ENCODE measurements at regions of chr19 and their contacts with region 1.

Region 1: DNA sequence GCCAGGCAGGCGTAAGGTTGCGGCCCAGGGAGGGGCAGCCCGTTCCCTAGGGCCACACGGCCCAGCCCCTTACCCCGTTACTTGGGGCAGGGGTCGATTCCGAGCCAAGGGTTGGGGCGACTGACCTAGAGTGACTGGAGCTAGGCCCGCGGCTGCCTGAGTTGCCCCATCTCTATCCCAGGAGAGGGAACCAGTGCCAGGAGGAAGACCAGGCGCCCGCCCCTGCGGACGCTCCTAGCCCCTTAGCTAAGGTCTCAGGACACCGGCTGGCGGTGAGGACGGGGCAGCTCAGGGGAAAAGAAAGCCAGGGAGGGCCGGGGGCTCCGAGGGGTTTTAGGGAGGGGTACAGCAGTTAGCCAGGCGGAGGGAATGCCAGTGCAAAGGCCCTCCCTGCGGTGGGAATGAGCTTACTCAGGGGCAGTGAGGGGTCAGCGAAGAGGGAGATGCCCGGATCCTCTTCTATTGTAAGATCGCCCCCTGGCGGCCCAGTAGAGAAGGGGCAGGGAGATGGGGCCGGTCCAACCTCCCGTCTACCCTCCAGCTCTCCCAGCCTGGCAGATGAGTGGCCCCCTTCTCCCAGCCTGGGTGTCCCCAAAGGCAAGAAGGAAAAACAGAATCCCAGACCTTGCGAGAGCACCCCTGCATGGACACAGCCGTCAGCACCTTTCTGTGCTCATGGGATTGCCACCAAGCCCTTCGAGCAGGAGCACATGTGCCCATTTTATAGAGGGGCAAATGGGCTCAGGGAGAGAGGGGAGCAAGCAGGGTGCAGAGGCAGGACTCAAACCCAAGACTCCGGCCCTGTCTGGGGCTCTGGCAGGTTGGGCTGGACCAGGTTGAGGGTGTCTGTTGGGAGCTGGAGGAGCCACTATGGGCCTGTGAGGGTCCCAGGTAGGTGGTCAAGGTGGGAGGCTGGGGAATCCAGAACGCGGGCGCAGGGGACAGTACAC is 16.3 kb downstream of the CILP2 start:
- DNase-seq: peak; percentile 85
- CTCF ChIP-seq: peak; percentile 68

Region 2: DNA sequence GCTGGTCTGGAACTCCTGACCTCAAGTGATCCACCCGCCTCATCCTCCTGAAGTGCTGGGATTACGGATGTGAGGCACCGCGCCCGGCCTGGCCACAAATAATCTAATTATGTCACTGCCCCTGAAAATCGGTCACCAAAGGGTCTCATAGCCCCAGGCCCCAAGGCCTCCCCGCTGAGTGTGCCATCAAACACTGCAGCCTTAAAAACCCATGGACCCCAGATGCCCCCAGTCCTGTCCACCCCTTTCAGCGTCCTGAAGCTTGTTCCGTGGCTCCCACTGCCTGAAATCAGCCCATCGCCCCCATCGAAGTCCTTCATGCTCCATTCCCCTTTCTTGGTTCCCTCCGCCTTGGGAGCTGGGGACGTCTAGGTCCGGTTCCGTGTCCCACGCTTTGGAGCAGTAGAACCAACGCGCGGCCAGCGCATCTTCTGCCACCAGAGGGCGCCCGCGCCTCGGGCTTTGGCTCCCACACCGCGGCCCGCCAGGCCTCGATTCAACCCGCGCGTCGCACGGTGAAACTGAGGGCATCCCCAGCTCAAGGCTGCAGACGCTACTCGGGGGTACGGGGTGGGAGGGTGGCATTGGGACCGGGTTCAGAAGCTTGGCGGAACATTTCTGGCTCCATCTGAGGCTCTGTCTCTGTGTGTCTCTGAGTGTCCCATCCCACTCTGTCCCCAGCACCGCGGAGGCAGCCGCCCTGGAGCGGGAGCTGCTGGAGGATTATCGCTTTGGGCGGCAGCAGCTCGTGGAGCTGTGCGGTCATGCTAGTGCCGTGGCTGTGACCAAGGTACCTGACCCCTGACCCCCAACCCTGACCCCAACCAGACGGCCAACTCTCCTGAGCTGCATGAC is 22.2 kb before region 1 on chr19:
- CTCF ChIA-PET with region 1: interaction called, 251 read pairs
- POLR2A ChIA-PET with region 1: no interaction called
- DNase-seq: peak; percentile 86
- CTCF ChIP-seq: peak; percentile 93

Region 3: DNA sequence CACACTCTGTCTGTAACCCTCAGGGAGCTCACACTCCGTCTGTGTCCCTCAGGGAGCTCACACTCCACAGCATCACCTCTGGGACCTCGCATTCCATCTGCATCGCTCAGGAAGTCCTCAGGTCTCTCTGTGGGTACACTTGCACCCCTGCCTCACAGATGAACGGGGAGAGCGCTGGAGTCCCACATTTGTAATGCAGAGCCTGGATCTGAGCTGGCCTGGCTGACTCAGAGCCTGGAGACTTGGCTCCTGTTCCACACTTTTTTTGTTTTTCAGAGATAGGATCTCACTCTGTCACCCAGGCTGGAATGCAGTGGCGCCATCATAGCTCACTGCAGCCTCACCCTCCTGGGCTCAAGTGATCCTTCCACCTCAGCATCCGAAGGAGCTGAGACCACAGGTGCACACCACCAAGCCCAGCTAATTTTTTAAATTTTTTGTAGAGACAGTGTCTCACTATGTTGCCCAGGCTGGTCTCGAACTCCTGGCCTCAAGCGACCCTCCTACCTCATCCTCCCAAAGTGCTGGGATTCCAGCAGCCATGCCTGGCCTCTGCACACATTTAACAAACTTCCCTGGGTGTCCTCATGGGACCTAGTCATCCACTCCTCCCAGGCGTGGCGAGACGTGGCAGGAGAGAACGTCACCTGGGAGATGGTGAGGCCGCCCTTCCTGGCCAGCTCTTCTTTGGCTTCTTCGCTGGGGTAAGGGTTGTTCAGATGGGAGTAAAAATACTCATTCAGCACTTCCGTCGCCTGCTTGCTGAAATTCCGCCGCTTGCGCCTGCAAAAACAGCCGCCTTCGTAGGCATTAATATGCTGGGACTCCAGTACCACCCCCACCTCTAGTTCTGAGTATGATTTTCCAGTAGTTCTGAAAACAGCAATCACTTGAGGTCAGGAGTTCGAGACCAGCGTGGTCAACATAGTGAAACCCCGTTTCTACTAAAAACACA is 14.7 kb after region 1 on chr19:
- CTCF ChIA-PET with region 1: interaction called, 93 read pairs
- POLR2A ChIA-PET with region 1: interaction called, 3 read pairs
- DNase-seq: no peak
- CTCF ChIP-seq: no peak

Region 4: GRCh38 chr19:19597809-19598306 is 43.5 kb after region 1 on chr19:
- CTCF ChIA-PET with region 1: interaction called, 11 read pairs
- POLR2A ChIA-PET with region 1: no interaction called
- DNase-seq: peak; percentile 73
- CTCF ChIP-seq: no peak

Region 5: GRCh38 chr19:19643158-19644053 is 89.1 kb after region 1 on chr19 and contains the start of gene GMIP:
- CTCF ChIA-PET with region 1: interaction called, 12 read pairs
- POLR2A ChIA-PET with region 1: no interaction called
- DNase-seq: peak; percentile 95
- CTCF ChIP-seq: peak; percentile 73

Region 6: DNA sequence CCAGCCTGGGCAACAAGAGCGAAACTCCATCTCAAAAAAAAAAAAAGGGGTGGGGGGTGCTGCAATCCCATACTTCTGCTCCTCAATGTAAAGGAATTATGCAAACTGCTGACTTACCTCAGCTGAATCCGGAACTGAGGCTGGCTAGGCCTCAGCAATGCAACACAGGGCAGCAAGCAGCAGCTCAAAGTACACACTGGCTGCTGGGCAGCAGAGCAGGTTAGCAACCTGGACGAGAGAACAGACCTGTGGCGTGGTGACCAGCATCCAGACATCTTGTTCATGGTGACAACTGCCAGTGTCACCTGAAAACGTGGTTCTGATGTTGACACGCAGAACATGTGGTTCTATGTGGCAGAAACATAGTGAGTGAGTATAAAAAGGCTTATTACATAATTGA is 150.5 kb after region 1 on chr19:
- CTCF ChIA-PET with region 1: no interaction called
- POLR2A ChIA-PET with region 1: no interaction called
- DNase-seq: no peak
- CTCF ChIP-seq: no peak